GM12878 (cell line): ENCODE measurements at regions of chr12 and their contacts with region 1.

Region 1: GRCh38 chr12:32603858-32604257 is 75.2 kb upstream of the DNM1L start:
- DNase-seq: peak; percentile 66
- ATAC-seq: peak; percentile 99
- H3K4me3 ChIP-seq: no peak overlapping the region
- H3K27ac ChIP-seq: no peak overlapping the region
- H3K4me1 ChIP-seq: 0 out of 2 replicates have a peak, but pooled peaks cover 2% of the 10 kb centered on the region
- H3K27me3 ChIP-seq: no peaks in the 10 kb centered on the region
- CTCF ChIP-seq: no peak
- EP300 ChIP-seq: peak; percentile 7 to 64; a peak in 2 of 4 replicates
- POLR2A ChIP-seq: no peak
- RAD21 ChIP-seq: no peak

Region 2: DNA sequence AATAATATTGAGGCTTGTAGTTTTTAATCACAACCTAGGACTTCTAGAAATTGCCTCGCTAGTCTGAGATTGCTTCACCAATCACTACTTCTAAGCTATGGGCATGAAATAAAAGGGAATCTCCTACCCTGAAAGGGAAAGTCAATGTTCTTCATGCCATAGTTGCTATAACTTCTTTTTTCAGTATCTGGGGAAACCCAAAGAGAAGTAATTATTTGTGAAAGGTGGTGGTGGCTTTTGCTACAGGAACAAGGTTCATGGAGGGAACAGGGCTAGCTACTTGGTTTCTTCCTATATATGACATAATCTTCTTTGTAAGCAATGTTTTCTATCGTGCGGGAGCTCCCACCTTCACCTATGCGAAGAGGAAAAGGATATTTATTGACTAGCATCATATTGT is 13.7 kb after region 1 on chr12:
- CTCF ChIA-PET with region 1: no interaction called
- POLR2A ChIA-PET with region 1: interaction called, 4 read pairs
- RAD21 ChIA-PET with region 1: interaction called, 4 read pairs
- SMC1A ChIA-PET with region 1: interaction called, 10 read pairs
- in situ Hi-C with region 1: no loop called
- intact Hi-C with region 1: no loop called
- DNase-seq: no peak
- ATAC-seq: peak; percentile 70
- H3K4me3 ChIP-seq: no peak overlapping the region
- H3K27ac ChIP-seq: no peak overlapping the region
- H3K4me1 ChIP-seq: no peaks in the 10 kb centered on the region
- H3K27me3 ChIP-seq: no peaks in the 10 kb centered on the region
- CTCF ChIP-seq: no peak
- EP300 ChIP-seq: no peak
- POLR2A ChIP-seq: no peak
- RAD21 ChIP-seq: no peak